CD4-positive, alpha-beta memory T cell (primary cell): ENCODE measurements at regions of chr9 and their contacts with region 1.

Region 1: DNA sequence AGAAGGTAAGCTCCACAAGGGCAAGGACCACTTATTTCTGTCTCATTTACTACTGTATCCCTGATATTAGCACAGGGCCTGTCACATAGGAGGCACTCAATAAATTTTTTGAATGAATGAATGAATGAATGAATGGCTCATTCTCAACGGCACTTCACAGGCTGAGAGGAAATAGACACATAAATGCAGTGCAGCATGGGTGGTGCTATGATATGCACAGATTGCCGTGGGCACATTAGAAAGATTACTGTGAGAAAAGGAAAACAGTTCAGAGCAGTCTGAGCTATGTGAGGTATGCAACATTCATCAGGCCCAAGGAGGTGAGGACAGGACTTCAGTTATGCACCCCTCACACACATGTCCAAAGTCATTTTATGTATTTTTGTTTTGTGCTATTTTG is 6.4 kb upstream of the NOL6 start:
- DNase-seq: no peak
- H3K4me3 ChIP-seq: no peak overlapping the region
- H3K4me3 Mint-ChIP-seq: no peak overlapping the region
- H3K27ac ChIP-seq: no peak overlapping the region
- H3K27ac Mint-ChIP-seq: peak overlapping the region in 1 of 7 donors; percentile 35
- H3K4me1 ChIP-seq: no peaks in the 10 kb centered on the region
- H3K4me1 Mint-ChIP-seq: no peaks in the 10 kb centered on the region
- H3K27me3 ChIP-seq: no peaks in the 10 kb centered on the region
- H3K27me3 Mint-ChIP-seq: peaks cover 0 to 2% of the 10 kb centered on the region in 2 donors

Region 2: DNA sequence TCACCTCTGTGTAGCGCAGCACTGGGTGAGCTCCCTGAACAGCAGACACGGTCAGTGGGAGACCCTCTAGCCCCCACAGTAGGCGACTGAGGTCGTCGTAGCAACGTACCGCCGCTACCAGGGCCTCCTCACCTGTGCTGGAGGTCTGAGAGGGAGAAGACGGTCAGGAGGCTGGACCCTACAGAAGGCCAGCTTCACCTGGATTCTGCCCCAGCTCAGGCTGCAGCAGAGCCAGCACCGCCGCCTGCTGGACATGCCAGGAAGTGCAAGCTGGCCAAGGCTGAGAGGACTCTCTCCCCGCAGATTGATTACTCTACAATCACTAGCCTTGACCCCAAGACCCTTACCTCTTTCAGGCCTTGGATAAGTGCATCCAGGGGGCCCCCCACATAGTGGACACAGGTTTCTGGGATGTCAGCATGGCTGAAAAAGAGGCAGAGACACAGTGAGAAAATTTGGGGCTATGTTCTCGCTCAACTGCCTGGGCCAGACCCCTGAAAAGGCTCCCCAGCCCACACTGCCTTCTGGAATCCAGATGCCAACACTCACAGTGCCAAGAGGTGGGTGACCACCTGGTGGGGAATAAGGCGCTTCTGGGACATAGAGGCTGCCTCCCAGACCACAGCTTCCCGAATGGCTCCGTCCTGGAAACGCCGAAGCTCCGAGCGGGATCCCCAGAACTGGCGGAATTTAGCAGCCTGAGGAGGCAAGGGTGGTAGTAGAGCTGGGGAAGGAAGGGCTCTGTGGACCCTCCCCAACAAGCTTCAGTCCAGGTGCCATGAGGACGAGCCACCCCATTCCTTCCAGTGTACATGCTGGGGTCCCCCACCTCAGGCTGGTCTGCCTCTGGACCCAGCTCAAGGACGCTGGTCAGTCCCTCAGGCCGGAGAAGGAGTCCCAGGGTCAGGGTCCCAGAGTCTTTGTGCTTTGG is 13.3 kb before region 1 on chr9:
- CTCF ChIA-PET with region 1: interaction called, 18 read pairs
- POLR2A ChIA-PET with region 1: interaction called, 3 read pairs
- intact Hi-C with region 1: no loop called
- DNase-seq: peak; percentile 57 to 77 (median 61)
- H3K4me3 ChIP-seq: no peak overlapping the region
- H3K4me3 Mint-ChIP-seq: no peak overlapping the region
- H3K27ac ChIP-seq: no peak overlapping the region
- H3K27ac Mint-ChIP-seq: peak overlapping the region; percentile 13 to 83 (median 50)
- H3K4me1 ChIP-seq: peaks cover 6% of the 10 kb centered on the region
- H3K4me1 Mint-ChIP-seq: peaks cover 5 to 12% (median 7%) of the 10 kb centered on the region in 4 donors
- H3K27me3 ChIP-seq: no peaks in the 10 kb centered on the region
- H3K27me3 Mint-ChIP-seq: no peaks in the 10 kb centered on the region